ENCODE measurements at regions of chr7 and their contacts with region 1.

Region 1: GRCh38 chr7:131007394-131008330 is 273.7 kb upstream of the KLF14 start:
- DNase-seq: no peak
- H3K4me3 ChIP-seq: no peak overlapping the region
- H3K27ac ChIP-seq: peak overlapping the region; percentile 43
- H3K27me3 ChIP-seq: no peaks in the 10 kb centered on the region
- CTCF ChIP-seq: peak; percentile 72

Region 2: GRCh38 chr7:129896568-129897382 is 1110.9 kb before region 1 on chr7:
- CTCF ChIA-PET with region 1: no interaction called
- POLR2A ChIA-PET with region 1: no interaction called
- DNase-seq: no peak
- H3K4me3 ChIP-seq: no peak overlapping the region
- H3K27ac ChIP-seq: no peak overlapping the region
- H3K27me3 ChIP-seq: no peaks in the 10 kb centered on the region
- CTCF ChIP-seq: no peak

Region 3: GRCh38 chr7:130904031-130904757 is 103.5 kb before region 1 on chr7:
- CTCF ChIA-PET with region 1: interaction called, 7 read pairs
- POLR2A ChIA-PET with region 1: interaction called, 11 read pairs
- DNase-seq: peak; percentile 64
- H3K4me3 ChIP-seq: peak overlapping the region; percentile 34
- H3K27ac ChIP-seq: peak overlapping the region; percentile 95
- H3K27me3 ChIP-seq: no peaks in the 10 kb centered on the region
- CTCF ChIP-seq: no peak

Region 4: GRCh38 chr7:130961128-130961601 is 46.5 kb before region 1 on chr7:
- CTCF ChIA-PET with region 1: interaction called, 10 read pairs
- POLR2A ChIA-PET with region 1: no interaction called
- DNase-seq: no peak
- H3K4me3 ChIP-seq: peak overlapping the region; percentile 26
- H3K27ac ChIP-seq: peak overlapping the region; percentile 97
- H3K27me3 ChIP-seq: no peaks in the 10 kb centered on the region
- CTCF ChIP-seq: no peak